ENCODE measurements at regions of chr14 and their contacts with region 1.

Region 1: GRCh38 chr14:22556990-22557623 is 31.9 kb downstream of the DAD1 start:
- DNase-seq: peak; percentile 85 to 90 (median 88)
- ATAC-seq: peak; percentile 84 to 88 (median 84)
- H3K4me3 ChIP-seq: peak overlapping the region in 1 of 3 donors; percentile 27
- H3K27ac ChIP-seq: peak overlapping the region; percentile 20 to 43 (median 33)
- H3K4me1 ChIP-seq: peaks cover 0 to 22% (median 7%) of the 10 kb centered on the region in 4 donors
- H3K27me3 ChIP-seq: no peaks in the 10 kb centered on the region
- CTCF ChIP-seq: peak; percentile 95 to 100 (median 98)
- POLR2A ChIP-seq: no peak

Region 2: GRCh38 chr14:22226381-22226780 is 330.7 kb before region 1 on chr14:
- intact Hi-C with region 1: no loop called
- DNase-seq: no peak
- ATAC-seq: no peak
- H3K4me3 ChIP-seq: no peak overlapping the region
- H3K27ac ChIP-seq: no peak overlapping the region
- H3K4me1 ChIP-seq: no peaks in the 10 kb centered on the region
- H3K27me3 ChIP-seq: peaks cover 0 to 8% of the 10 kb centered on the region in 2 donors
- CTCF ChIP-seq: no peak
- POLR2A ChIP-seq: no peak

Region 3: DNA sequence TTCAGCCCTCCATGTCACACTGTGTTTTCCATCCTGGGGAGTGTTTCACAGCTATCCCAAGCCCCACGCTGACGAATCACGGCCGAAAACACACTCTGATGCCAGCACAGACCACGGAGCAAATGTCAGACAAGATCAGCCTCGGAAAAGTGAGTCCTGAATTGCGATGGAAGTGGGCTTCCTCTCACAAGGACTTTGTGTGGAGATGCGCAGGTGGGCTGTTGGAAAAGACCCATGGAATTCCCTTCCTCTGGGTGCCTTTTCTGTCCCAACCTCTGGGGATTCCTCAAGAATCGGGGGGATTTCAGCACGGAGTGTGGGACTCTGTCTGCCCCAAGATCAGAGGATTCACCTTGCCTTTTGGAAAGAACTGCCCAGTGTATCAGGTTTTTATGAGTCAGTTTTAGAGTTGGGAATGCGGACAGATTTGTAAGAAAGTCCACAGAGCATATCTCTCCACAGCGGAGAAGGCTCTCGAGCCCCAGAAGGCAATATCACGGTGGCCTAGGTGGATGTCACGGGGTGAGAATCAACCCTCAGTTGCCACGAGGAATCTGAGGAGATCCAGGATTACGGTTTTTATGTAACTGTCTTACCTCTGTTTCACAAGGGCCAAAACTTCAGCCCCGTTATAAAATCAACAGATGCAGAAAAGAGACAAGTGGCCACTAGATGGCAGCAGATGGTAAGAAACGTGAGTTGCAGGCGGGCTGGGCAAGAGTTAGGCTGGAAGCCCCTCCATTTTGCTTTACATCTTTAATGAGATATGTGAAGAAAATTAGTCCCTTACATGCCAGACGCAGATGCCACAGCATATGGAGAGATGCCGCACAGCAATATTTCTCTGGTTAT is 170.0 kb before region 1 on chr14:
- intact Hi-C with region 1: loop called in 1 of 2 experiments (anchors 10 kb)
- DNase-seq: peak in 1 of 3 donors; percentile 60
- ATAC-seq: peak; percentile 68 to 83 (median 80)
- H3K4me3 ChIP-seq: no peak overlapping the region
- H3K27ac ChIP-seq: no peak overlapping the region
- H3K4me1 ChIP-seq: no peaks in the 10 kb centered on the region
- H3K27me3 ChIP-seq: no peaks in the 10 kb centered on the region
- CTCF ChIP-seq: peak; percentile 74 to 81 (median 78)
- POLR2A ChIP-seq: no peak

Region 4: GRCh38 chr14:22653012-22653621 is 96.0 kb after region 1 on chr14:
- intact Hi-C with region 1: loop called (anchors 10 kb)
- DNase-seq: peak in 2 of 3 donors; percentile 52 to 66
- ATAC-seq: peak; percentile 97 to 98 (median 98)
- H3K4me3 ChIP-seq: no peak overlapping the region
- H3K27ac ChIP-seq: no peak overlapping the region
- H3K4me1 ChIP-seq: no peaks in the 10 kb centered on the region
- H3K27me3 ChIP-seq: no peaks in the 10 kb centered on the region
- CTCF ChIP-seq: peak; percentile 72 to 85 (median 78)
- POLR2A ChIP-seq: no peak

Measured in right lobe of liver (tissue), 6 donors.